T-cell (primary cell): ENCODE measurements at regions of chr10 and their contacts with region 1.

Region 1: GRCh38 chr10:14262836-14263425 is 67.8 kb downstream of the FRMD4A start:
- DNase-seq: no peak
- ATAC-seq: no peak
- H3K4me3 ChIP-seq: no peak overlapping the region
- H3K4me3 Mint-ChIP-seq: no peak overlapping the region
- H3K27ac ChIP-seq: no peak overlapping the region
- H3K27ac Mint-ChIP-seq: no peak overlapping the region
- H3K4me1 ChIP-seq: no peaks in the 10 kb centered on the region
- H3K4me1 Mint-ChIP-seq: no peaks in the 10 kb centered on the region
- H3K27me3 ChIP-seq: peaks cover 0 to 9% of the 10 kb centered on the region in 2 experiments
- H3K27me3 Mint-ChIP-seq: peaks cover 14 to 32% of the 10 kb centered on the region in 2 donors

Region 2: GRCh38 chr10:12927896-12928295 is 1335.0 kb before region 1 on chr10:
- CTCF ChIA-PET with region 1: no interaction called
- POLR2A ChIA-PET with region 1: no interaction called
- DNase-seq: no peak
- ATAC-seq: no peak
- H3K4me3 ChIP-seq: no peak overlapping the region
- H3K4me3 Mint-ChIP-seq: no peak overlapping the region
- H3K27ac ChIP-seq: no peak overlapping the region
- H3K27ac Mint-ChIP-seq: no peak overlapping the region
- H3K4me1 ChIP-seq: no peaks in the 10 kb centered on the region
- H3K4me1 Mint-ChIP-seq: no peaks in the 10 kb centered on the region
- H3K27me3 ChIP-seq: no peaks in the 10 kb centered on the region
- H3K27me3 Mint-ChIP-seq: peaks cover 4 to 9% of the 10 kb centered on the region in 2 donors

Region 3: DNA sequence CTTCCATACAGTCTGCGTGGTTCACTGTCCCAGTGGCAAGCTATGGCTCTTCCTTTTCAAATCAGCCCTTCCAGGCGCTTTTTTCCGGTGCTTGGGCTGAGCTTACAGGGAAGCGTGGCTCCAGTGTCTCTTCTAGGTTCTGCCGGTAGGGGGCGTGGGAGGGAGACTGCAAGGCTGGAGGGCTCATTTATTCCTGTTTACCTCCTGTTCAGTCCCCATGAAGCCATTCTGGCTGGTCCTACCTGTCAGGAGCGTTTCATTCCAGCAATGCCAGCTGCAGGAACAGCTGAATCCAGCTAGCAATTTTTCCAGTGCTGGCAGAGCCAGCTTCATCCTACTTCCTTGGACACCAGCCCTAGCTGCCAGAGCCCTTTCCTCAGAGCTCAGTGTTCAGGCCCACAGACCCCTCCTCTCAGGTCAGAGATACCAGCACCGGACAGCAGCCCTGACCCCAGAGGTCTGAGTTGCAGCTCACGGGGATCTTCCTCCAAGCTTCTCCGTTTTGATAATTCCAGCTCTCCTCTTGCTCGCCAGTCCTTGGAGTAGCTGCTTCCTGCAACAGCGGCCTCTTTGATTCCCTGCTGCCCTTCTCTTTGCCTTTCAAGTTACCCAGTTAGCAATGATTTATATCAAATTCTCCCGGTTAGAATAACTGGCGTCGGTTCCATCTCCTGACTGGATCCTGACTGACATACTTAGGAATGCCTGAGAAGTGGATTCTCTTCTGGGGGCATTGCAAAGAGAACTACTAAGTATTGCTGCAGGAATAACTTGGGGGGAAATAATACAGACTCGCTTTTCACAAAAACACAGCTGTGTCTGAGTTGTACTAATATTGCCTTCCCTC is 62.0 kb before region 1 on chr10:
- CTCF ChIA-PET with region 1: no interaction called
- POLR2A ChIA-PET with region 1: no interaction called
- DNase-seq: no peak
- ATAC-seq: no peak
- H3K4me3 ChIP-seq: no peak overlapping the region
- H3K4me3 Mint-ChIP-seq: no peak overlapping the region
- H3K27ac ChIP-seq: no peak overlapping the region
- H3K27ac Mint-ChIP-seq: no peak overlapping the region
- H3K4me1 ChIP-seq: no peaks in the 10 kb centered on the region
- H3K4me1 Mint-ChIP-seq: no peaks in the 10 kb centered on the region
- H3K27me3 ChIP-seq: peaks cover 0 to 26% of the 10 kb centered on the region in 2 experiments
- H3K27me3 Mint-ChIP-seq: peaks cover 25 to 26% of the 10 kb centered on the region in 2 donors

Region 4: GRCh38 chr10:14397066-14397465 is 134.1 kb after region 1 on chr10:
- CTCF ChIA-PET with region 1: interaction called in 1 of 2 experiments, 11 read pairs
- POLR2A ChIA-PET with region 1: no interaction called
- DNase-seq: no peak
- ATAC-seq: no peak
- H3K4me3 ChIP-seq: no peak overlapping the region
- H3K4me3 Mint-ChIP-seq: no peak overlapping the region
- H3K27ac ChIP-seq: no peak overlapping the region
- H3K27ac Mint-ChIP-seq: no peak overlapping the region
- H3K4me1 ChIP-seq: no peaks in the 10 kb centered on the region
- H3K4me1 Mint-ChIP-seq: no peaks in the 10 kb centered on the region
- H3K27me3 ChIP-seq: peaks cover 0 to 11% of the 10 kb centered on the region in 2 experiments
- H3K27me3 Mint-ChIP-seq: peaks cover 10 to 23% of the 10 kb centered on the region in 2 donors

Region 5: DNA sequence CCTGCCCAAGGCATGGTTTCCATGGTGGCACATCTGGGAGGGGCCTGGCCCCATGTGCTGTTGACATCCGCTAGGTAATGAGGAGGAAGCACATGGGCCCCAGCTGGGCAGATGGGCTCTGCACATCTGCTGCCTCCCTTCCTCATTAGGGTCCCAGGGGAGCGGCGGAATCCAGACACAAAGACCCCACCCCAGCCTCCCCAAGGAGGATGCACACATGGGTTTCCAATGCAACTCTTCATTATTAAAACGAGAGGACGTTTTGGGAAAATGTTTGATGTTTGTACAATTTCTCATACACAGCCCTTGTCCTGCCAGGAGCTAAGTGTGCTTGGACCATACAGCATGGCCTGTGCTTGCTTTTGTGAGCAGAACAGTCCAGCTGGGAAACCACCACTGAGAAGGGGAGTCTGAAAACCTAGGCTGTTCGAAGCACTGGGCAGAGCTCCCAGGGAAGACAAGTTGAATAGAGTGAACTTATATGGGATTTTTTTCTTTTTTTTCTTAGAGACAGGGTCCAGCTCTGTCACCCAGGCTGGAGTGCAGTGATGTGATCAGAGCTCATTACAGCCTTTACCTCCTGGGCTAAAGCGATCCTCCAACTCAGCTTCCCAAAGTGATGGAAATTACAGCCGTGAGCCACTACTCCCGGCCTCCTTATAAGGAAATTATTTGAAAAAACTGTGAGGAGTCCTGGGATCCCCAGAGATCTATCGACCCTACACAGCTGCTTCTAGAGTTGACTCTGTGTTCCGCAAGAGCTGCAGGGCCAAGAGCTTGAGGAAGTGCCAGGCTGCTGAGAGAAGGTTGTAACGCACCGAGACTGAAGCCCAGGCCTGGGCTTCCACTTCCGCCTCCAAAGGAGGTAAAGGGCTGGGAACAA is 488.3 kb after region 1 on chr10:
- CTCF ChIA-PET with region 1: no interaction called
- POLR2A ChIA-PET with region 1: no interaction called
- DNase-seq: no peak
- ATAC-seq: no peak
- H3K4me3 ChIP-seq: no peak overlapping the region
- H3K4me3 Mint-ChIP-seq: no peak overlapping the region
- H3K27ac ChIP-seq: no peak overlapping the region
- H3K27ac Mint-ChIP-seq: no peak overlapping the region
- H3K4me1 ChIP-seq: no peaks in the 10 kb centered on the region
- H3K4me1 Mint-ChIP-seq: peaks cover 0 to 10% (median 0%) of the 10 kb centered on the region in 3 donors
- H3K27me3 ChIP-seq: peaks cover 0 to 6% of the 10 kb centered on the region in 2 experiments
- H3K27me3 Mint-ChIP-seq: no peaks in the 10 kb centered on the region